Activated CD8-positive, alpha-beta memory T cell treated with anti-CD3 and anti-CD28 coated beads, Interleukin-2, amount 10 ng/mL, durations not matched to agents 7 days and 5 days (primary cell): ENCODE measurements at regions of chr14 and their contacts with region 1.

Region 1: GRCh38 chr14:99982537-99983250 is 82.5 kb upstream of the EVL start:
- DNase-seq: peak; percentile 70
- ATAC-seq: peak; percentile 92
- H3K4me3 Mint-ChIP-seq: no peak overlapping the region
- H3K27ac Mint-ChIP-seq: no peak overlapping the region
- H3K4me1 Mint-ChIP-seq: peaks cover 18% of the 10 kb centered on the region
- H3K27me3 Mint-ChIP-seq: no peaks in the 10 kb centered on the region

Region 2: GRCh38 chr14:99936747-99937474 is 45.8 kb before region 1 on chr14:
- CTCF ChIA-PET with region 1: no interaction called
- DNase-seq: no peak
- ATAC-seq: no peak
- H3K4me3 Mint-ChIP-seq: no peak overlapping the region
- H3K27ac Mint-ChIP-seq: no peak overlapping the region
- H3K4me1 Mint-ChIP-seq: no peaks in the 10 kb centered on the region
- H3K27me3 Mint-ChIP-seq: peaks cover 4% of the 10 kb centered on the region

Region 3: DNA sequence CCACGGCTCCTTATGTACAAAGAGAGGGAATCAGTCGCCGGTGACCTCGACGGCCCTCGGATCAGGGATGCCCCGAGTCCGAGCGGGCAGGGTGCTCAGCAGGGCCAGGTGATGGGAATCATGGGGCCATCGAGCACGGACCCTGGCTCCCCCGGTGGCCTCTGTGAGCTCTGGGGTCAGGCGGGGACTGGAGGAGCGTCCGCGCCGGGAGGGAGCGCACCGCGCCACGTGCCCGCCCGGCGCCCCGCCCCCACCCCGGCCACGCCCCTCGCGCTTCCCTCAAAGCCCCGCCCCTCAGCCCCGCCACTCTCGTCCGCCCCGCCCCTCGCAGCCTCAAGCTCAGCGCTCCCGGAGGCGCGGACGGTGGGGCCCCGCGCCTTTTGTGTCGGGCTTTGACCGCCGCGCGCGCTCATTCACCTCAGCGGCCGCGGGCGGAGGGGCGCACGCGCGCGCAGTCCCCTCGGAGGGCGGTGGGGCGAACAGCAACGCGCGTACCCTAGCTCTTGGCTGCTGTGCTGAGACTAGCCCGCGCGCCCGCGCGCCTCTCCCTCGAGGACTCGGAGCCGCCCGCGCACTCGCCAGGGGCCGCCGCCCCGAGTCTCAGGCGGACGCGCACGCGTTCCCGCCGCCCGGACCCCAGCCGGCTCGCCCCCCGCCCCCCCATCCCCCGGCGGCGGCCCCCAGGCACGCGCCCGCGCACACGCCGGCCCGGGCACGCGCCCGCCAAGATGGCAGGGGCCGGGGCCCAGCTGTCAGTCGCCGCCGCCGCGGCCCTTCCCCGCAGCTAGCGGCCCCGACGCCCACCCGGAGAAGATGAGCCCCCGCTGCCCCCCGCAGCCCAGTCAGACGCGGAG is 11.4 kb before region 1 on chr14:
- CTCF ChIA-PET with region 1: interaction called, 33 read pairs
- DNase-seq: peak; percentile 84
- ATAC-seq: peak; percentile 82
- H3K4me3 Mint-ChIP-seq: peak overlapping the region; percentile 89
- H3K27ac Mint-ChIP-seq: no peak overlapping the region
- H3K4me1 Mint-ChIP-seq: peaks cover 17% of the 10 kb centered on the region
- H3K27me3 Mint-ChIP-seq: peaks cover 36% of the 10 kb centered on the region

Region 4: DNA sequence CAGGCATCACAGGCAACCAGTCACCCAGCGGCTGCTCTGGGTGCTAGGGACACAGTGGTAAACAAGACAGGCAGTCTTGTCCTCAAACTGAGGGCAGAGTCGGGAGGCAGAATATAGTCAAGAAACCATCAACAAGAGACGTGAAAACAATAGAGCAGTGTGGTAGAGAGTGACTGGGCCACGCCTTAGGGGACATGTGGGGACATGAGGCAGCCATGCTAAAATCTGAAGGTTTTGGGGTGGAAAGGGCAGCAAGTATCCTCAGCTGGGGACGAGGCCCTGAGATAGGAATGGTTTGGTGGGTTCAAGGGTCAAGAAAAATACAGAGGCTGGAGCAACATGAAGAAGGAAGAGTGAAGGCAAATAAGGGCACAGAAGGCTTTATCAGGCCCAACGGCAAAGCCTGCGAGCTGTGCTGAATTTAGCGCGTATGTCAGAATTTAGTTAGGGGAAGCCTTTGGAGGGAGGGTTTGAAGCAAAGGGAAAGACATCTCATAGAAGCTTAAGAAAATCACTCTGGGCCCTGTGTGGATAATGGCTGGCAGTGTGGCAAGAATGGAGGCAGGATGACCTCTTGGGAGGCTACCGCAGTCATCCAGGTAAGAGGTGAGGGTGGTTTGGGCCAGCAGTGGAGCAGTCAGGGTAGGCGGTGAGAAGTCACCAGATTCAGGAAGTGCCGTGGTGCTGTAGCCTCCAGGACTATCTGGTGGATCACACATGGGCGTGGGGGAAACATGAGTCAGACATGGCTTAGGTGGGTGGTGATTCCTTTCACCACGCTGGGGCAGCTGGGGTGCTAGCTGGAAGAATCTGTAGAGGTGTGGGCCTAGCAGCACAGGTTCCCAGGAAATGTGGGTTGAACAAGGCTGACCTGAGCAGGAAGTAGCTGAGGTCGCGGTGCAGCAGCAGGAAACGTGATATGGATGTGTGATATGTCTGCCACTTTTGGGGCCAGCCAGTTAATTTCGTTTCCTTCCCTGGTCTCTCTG is 85.6 kb after region 1 on chr14:
- CTCF ChIA-PET with region 1: interaction called, 16 read pairs
- DNase-seq: peak; percentile 96
- ATAC-seq: peak; percentile 54
- H3K4me3 Mint-ChIP-seq: peak overlapping the region; percentile 97
- H3K27ac Mint-ChIP-seq: peak overlapping the region; percentile 99
- H3K4me1 Mint-ChIP-seq: peaks cover 54% of the 10 kb centered on the region
- H3K27me3 Mint-ChIP-seq: no peaks in the 10 kb centered on the region

Region 5: GRCh38 chr14:100078991-100079725 is 96.5 kb after region 1 on chr14:
- CTCF ChIA-PET with region 1: interaction called, 11 read pairs
- DNase-seq: peak; percentile 96
- ATAC-seq: peak; percentile 80
- H3K4me3 Mint-ChIP-seq: peak overlapping the region; percentile 76
- H3K27ac Mint-ChIP-seq: peak overlapping the region; percentile 89
- H3K4me1 Mint-ChIP-seq: peaks cover 96% of the 10 kb centered on the region
- H3K27me3 Mint-ChIP-seq: no peaks in the 10 kb centered on the region